HAP-1 (cell line): ENCODE measurements at regions of chr14 and their contacts with region 1.

Region 1: GRCh38 chr14:23562268-23563203 is 5.1 kb downstream of the AP1G2 start:
- DNase-seq: peak; percentile 53 to 81
- H3K4me3 ChIP-seq: no peak overlapping the region
- H3K4me1 ChIP-seq: peaks cover 5% of the 10 kb centered on the region; the same call in 1 of the 2 replicates
- H3K27me3 ChIP-seq: no peaks in the 10 kb centered on the region

Region 2: DNA sequence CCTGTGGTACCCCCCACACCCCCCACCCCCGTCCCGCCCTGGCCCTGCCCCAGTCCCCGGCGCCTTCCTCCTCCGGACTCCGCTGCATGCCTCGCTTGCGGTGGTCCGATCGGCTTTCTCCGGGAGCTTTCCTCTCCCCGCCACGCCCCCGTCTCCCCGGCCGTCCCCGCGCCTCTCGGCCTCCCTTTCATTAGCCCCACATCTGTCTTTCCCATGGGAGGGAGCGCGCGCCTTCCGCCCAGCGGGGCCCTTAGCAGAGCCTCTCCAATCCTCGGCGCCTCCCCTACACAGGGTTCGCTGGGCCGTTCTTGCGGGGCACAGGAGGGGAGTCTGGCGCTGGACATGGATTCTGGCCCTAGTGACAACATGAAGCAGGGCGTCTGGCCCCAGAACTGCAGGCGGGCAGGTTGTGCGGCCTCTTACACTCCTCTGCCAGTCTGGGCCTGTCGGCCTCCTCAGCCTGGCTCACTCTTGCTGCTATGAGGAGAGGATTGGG is 196.1 kb before region 1 on chr14:
- in situ Hi-C with region 1: no loop called
- DNase-seq: peak in 1 of 2 experiments; percentile 14
- H3K4me3 ChIP-seq: no peak overlapping the region
- H3K4me1 ChIP-seq: no peaks in the 10 kb centered on the region
- H3K27me3 ChIP-seq: peaks cover 36% of the 10 kb centered on the region

Region 3: DNA sequence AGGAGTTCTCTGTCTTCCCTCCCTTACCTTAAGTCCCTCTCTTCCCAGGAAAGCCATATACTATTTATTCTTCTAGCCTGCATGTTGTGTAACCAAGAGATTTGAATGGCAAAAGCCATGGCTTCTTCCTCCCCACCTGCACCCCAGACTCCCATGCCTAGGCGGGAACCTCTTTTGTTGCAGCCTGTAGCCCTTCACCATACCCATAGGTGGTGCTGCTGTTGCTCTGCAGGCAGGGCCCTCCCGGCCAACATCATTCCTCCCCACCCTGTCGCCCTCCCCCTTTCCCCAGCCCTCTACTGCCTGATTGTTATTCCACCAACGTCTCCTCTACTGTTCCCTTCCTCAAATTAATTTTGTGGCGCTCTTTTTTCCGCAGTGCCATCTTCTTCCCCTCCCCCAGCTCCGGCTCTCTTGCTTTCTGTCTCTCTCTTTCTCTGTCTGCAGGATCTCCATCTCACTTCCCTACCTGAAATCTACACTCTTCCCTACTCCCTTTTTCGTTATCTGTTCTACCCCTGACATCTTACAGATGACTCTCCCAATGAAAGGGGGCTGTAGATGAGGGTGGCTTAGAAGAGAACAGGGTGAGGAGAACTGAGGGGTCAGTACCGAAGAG is 79.2 kb before region 1 on chr14:
- in situ Hi-C with region 1: loop called (anchors 5 kb)
- DNase-seq: peak; percentile 32 to 62
- H3K4me3 ChIP-seq: no peak overlapping the region
- H3K4me1 ChIP-seq: no peaks in the 10 kb centered on the region
- H3K27me3 ChIP-seq: no peaks in the 10 kb centered on the region

Region 4: DNA sequence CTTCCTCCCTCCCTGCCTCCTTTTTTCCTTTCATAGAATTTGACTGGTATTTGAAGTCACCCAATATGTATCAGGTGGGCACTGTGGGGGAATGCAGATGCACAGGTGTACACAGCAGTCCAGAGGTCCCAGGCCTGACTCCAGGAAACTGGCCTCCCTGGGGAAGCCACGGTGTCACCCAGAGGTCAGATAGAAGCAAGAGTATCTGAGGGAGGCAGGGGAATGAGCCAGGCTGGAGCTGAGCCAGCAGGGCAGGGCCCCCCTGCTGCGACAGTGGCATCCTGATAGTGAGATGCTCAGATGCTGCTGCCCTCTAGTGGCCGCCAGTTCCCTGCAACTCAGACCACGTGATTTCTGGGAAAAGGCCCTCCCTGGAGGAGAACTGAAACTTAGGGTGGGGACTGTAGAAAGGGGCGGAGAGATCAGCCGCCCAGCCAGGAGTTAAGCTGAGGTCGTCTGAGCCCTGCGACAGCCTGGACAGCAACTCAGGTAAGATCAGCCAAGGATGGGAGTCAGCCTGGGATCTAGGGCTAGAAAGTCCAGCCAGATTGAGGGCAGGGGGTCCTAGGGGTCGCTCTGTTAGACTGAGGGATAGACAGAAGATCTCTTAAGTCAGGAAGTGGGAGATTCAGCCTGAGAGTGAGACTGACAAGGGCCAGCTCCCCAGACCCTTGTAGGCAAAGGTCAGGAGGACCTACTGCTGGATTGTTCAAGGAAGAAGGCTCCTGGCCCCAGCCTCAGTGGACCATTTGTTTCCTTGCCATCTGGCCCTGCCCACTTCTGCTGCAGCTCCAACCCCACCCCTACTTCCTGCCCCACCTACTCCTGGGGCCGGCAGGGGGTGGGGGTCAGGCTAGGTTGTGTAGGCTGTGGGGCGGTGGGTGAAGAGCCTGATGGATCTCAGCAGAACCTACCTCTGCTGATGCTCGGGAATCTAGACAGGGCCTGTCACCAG is 598.6 kb after region 1 on chr14 and contains the start of gene IRF9:
- in situ Hi-C with region 1: no loop called
- DNase-seq: peak; percentile 92 to 98
- H3K4me3 ChIP-seq: peak within 1 kb of the TSS; percentile 1; the same call in 1 of the 2 replicates
- H3K4me1 ChIP-seq: peaks cover 5% of the 10 kb centered on the region; the same call in 1 of the 2 replicates
- H3K27me3 ChIP-seq: no peaks in the 10 kb centered on the region